Activated CD8-positive, alpha-beta memory T cell treated with anti-CD3 and anti-CD28 coated beads, Interleukin-2, amount 10 ng/mL, durations not matched to agents 7 days and 5 days (primary cell): ENCODE measurements at regions of chr4 and their contacts with region 1.

Region 1: GRCh38 chr4:112231779-112232713 is at the start of gene AP1AR:
- DNase-seq: peak; percentile 89
- ATAC-seq: peak; percentile 67
- H3K4me3 Mint-ChIP-seq: peak within 1 kb of the TSS; percentile 89
- H3K27ac Mint-ChIP-seq: peak within 1 kb of the TSS; percentile 99
- H3K4me1 Mint-ChIP-seq: peaks cover 30% of the 10 kb centered on the region
- H3K27me3 Mint-ChIP-seq: no peaks in the 10 kb centered on the region
- total RNA-seq, gene AP1AR: 13.6 to 17.8 TPM

Region 2: DNA sequence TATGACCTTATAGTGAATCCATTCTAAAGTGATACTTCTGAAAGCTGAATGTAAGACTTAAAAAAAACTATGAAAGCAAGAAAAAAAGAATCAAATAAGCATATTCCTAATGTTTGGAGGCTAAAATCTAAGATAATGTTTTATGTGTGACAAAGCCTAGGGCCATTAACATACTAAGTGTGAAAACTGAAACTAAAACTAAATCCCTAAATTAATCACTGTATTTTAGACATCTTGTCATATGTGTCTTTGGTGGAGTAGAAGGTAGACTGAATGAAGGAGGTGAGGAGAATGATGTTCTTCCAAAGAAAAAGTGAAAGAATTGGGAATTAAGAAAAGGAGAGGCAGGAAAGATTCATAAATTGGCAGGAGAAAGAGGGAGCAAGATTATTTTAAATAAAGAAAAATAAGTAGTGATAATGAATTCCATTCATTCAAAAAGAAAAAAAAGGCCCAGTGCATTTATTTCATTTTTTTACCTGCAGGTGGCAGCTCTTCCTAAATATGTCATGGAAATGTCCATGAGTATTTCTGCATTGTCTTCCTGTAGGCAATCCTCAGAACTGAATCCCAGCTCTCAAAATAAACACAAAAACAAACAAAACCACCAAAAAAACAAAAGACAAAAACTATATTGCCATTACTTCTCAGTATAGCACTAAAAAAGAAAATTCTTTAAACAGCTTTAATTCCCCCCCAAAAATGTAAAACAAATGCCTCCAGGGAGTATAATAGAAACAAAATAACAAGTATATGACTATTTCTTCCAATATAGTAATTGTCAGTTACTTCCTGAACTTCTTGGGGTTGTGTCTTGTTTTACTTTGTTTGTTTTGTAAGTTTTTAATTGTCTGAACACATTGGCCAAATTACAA is 17.4 kb before region 1 on chr4:
- CTCF ChIA-PET with region 1: interaction called, 10 read pairs
- DNase-seq: no peak
- ATAC-seq: peak; percentile 78
- H3K4me3 Mint-ChIP-seq: no peak overlapping the region
- H3K27ac Mint-ChIP-seq: no peak overlapping the region
- H3K4me1 Mint-ChIP-seq: peaks cover 8% of the 10 kb centered on the region
- H3K27me3 Mint-ChIP-seq: peaks cover 2% of the 10 kb centered on the region